CD8-positive, alpha-beta memory T cell (primary cell): ENCODE measurements at regions of chr13 and their contacts with region 1.

Region 1: DNA sequence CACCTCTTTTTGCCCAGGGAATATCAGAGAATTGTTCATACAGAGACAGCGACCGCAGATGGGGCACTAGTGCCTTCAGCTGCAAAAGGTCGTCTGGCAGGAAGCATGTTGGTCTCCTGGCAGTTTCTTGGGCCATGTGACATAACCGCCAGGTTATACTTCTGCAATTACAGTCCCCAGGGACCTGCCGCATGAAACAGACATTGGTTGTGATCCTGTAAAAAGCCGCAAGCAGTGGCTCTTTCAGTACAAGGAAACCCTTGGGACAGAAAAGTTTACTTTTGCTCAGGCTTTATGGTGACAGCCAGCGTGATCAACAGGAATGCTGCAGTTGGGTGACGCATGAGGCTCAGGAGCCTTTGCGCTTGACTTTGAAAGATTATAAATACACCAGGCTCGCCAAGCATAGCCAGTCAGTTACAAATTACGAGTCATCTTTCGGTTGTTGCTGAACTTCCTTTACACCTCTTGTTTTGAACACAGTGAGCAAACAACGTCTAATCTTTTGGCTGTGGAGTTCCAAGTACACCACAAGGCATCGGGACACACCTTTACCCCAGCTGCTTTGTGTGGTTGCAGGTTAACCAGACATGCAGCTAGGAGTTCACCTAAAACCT is 50.5 kb upstream of the UBE2L5 start:
- DNase-seq: peak in 4 of 5 donors; percentile 48 to 88 (median 84)
- H3K4me3 ChIP-seq: peak overlapping the region; percentile 19
- H3K4me3 Mint-ChIP-seq: peak overlapping the region; percentile 18 to 89 (median 86)
- H3K27ac ChIP-seq: peak overlapping the region; percentile 22
- H3K27ac Mint-ChIP-seq: peak overlapping the region; percentile 83 to 100 (median 96)
- H3K4me1 ChIP-seq: peaks cover 83% of the 10 kb centered on the region
- H3K4me1 Mint-ChIP-seq: peaks cover 77 to 93% (median 87%) of the 10 kb centered on the region in 3 donors
- H3K27me3 ChIP-seq: no peaks in the 10 kb centered on the region
- H3K27me3 Mint-ChIP-seq: peaks cover 0 to 3% of the 10 kb centered on the region in 2 donors

Region 2: DNA sequence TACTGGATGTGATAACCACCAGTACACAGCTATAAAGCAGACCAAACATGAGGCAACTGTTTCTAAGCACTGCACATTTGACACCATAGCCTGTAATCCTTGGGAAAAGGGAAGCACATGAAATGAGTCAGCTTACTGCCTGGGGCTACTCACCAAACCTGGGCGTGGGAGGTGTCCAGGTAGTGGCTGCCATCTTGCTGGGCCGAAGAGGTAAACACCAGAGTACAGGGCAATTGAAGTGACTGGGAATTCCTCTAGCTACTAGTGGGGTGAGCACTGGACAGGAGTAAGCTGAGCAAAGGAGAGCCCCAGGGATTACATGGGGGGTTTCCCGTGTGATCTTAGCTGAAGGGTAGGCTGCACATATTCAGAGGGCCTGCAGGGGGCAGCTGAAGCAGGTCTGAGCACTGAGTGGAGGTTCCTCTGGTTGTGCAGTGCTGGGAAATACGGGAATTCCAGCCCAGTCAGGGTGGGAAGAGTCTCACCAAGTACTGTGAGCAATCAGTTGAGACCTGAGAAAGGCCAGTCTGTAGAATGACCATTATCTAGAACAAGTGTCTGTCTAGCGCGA is 916.8 kb before region 1 on chr13:
- CTCF ChIA-PET with region 1: no interaction called
- POLR2A ChIA-PET with region 1: no interaction called
- DNase-seq: no peak
- H3K4me3 ChIP-seq: no peak overlapping the region
- H3K4me3 Mint-ChIP-seq: peak overlapping the region in 1 of 7 donors; percentile 11
- H3K27ac ChIP-seq: no peak overlapping the region
- H3K27ac Mint-ChIP-seq: no peak overlapping the region
- H3K4me1 ChIP-seq: no peaks in the 10 kb centered on the region
- H3K4me1 Mint-ChIP-seq: no peaks in the 10 kb centered on the region
- H3K27me3 ChIP-seq: no peaks in the 10 kb centered on the region
- H3K27me3 Mint-ChIP-seq: peaks cover 7 to 36% of the 10 kb centered on the region in 2 donors

Region 3: DNA sequence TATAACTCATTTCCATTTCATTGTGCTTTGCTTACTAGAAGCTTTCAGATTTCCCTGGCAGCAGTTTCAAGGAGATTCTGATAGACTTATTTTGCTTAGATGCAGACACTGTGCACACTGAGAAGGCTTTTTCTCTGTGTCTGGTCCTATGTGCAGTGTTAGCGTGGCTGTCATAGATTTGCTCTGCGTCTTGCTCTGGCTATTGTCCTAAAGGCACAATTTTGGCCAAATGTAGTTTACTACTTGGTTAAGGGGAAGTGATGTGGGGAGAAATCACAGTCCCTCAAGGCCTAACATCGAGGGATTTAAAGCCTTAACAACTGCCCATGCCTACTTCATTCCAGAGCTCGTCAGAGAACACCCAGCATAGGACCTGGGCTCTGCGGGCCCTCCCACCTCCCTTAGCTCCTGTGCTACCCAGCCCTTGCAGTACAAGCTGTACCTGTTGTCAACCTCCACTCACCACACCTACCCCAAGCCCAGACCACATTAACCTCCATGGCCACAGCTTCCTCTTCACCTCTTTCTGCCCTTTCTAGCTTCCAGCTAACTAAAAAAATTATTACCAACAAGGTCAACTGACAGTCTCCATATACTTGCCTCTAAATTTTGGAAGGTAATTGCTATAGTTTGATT is 25.5 kb before region 1 on chr13:
- CTCF ChIA-PET with region 1: interaction called, 19 read pairs
- POLR2A ChIA-PET with region 1: interaction called, 7 read pairs
- DNase-seq: peak; percentile 22 to 80 (median 72)
- H3K4me3 ChIP-seq: peak overlapping the region; percentile 20
- H3K4me3 Mint-ChIP-seq: peak overlapping the region; percentile 1 to 75 (median 56)
- H3K27ac ChIP-seq: no peak overlapping the region
- H3K27ac Mint-ChIP-seq: peak overlapping the region; percentile 1 to 75 (median 24)
- H3K4me1 ChIP-seq: peaks cover 35% of the 10 kb centered on the region
- H3K4me1 Mint-ChIP-seq: peaks cover 32 to 49% (median 45%) of the 10 kb centered on the region in 3 donors
- H3K27me3 ChIP-seq: no peaks in the 10 kb centered on the region
- H3K27me3 Mint-ChIP-seq: peaks cover 0 to 5% of the 10 kb centered on the region in 2 donors

Region 4: DNA sequence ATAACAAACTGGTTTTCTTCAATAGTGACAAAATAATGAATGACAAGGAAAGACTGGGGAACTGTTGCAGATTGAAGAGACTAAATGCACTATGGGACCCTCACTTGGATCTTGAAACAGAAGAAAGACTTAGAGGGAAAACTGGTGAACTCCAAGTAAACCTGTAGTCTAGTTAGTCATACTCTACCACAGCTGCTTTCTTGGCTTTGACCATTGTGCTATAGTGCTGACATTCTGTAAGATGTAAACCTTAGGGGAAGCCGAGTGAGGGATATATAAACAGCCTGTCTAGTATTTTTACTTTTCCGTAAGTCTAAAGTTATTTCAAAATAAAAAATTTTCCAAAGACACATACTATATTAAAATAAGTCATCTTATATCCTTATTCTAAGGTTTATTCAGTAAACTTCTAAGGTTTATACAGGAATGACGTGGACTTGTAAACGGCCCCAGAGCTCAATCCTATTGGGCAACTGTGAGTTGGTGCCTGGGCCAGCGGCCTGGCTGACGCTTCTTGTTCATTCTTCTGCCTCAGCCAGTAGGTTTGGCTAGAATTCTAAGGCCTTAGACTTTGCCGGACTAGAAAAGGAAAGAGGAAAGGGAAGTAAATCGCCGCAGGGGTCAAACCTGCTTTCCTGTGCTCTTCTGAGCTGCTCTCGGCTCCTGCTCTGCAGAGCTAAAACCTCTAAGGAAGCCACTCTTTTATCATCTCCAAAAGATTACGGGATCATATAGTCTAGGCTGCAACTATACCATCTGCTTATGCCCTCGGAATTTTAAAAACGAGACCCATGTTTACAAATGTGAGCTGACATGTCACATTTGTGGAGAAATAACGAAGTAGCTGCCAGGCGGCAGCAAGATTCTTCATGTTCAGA is 16.9 kb after region 1 on chr13:
- CTCF ChIA-PET with region 1: interaction called, 70 read pairs
- POLR2A ChIA-PET with region 1: interaction called, 21 read pairs
- DNase-seq: no peak
- H3K4me3 ChIP-seq: peak overlapping the region; percentile 51
- H3K4me3 Mint-ChIP-seq: peak overlapping the region in 4 of 7 donors; percentile 16 to 67 (median 63)
- H3K27ac ChIP-seq: no peak overlapping the region
- H3K27ac Mint-ChIP-seq: peak overlapping the region in 6 of 8 donors; percentile 9 to 87 (median 74)
- H3K4me1 ChIP-seq: peaks cover 30% of the 10 kb centered on the region
- H3K4me1 Mint-ChIP-seq: peaks cover 17 to 34% (median 31%) of the 10 kb centered on the region in 3 donors
- H3K27me3 ChIP-seq: no peaks in the 10 kb centered on the region
- H3K27me3 Mint-ChIP-seq: peaks cover 0 to 1% of the 10 kb centered on the region in 2 donors

Region 5: GRCh38 chr13:30395192-30396084 is 23.7 kb after region 1 on chr13:
- CTCF ChIA-PET with region 1: interaction called, 70 read pairs
- POLR2A ChIA-PET with region 1: interaction called, 21 read pairs
- DNase-seq: peak; percentile 58 to 85 (median 62)
- H3K4me3 ChIP-seq: peak overlapping the region; percentile 89
- H3K4me3 Mint-ChIP-seq: peak overlapping the region; percentile 80 to 98 (median 86)
- H3K27ac ChIP-seq: peak overlapping the region; percentile 76
- H3K27ac Mint-ChIP-seq: peak overlapping the region; percentile 71 to 99 (median 93)
- H3K4me1 ChIP-seq: peaks cover 25% of the 10 kb centered on the region
- H3K4me1 Mint-ChIP-seq: peaks cover 15 to 41% (median 40%) of the 10 kb centered on the region in 3 donors
- H3K27me3 ChIP-seq: no peaks in the 10 kb centered on the region
- H3K27me3 Mint-ChIP-seq: no peaks in the 10 kb centered on the region

Region 6: GRCh38 chr13:30408319-30409101 is 36.8 kb after region 1 on chr13:
- CTCF ChIA-PET with region 1: interaction called, 26 read pairs
- POLR2A ChIA-PET with region 1: interaction called, 4 read pairs
- DNase-seq: peak; percentile 81 to 92 (median 85)
- H3K4me3 ChIP-seq: no peak overlapping the region
- H3K4me3 Mint-ChIP-seq: peak overlapping the region; percentile 50 to 84 (median 72)
- H3K27ac ChIP-seq: no peak overlapping the region
- H3K27ac Mint-ChIP-seq: peak overlapping the region; percentile 63 to 93 (median 82)
- H3K4me1 ChIP-seq: peaks cover 10% of the 10 kb centered on the region
- H3K4me1 Mint-ChIP-seq: peaks cover 31 to 43% (median 36%) of the 10 kb centered on the region in 3 donors
- H3K27me3 ChIP-seq: no peaks in the 10 kb centered on the region
- H3K27me3 Mint-ChIP-seq: no peaks in the 10 kb centered on the region

Region 7: GRCh38 chr13:30465585-30466357 is 94.0 kb after region 1 on chr13 and contains the start of gene HMGB1:
- CTCF ChIA-PET with region 1: interaction called, 11 read pairs
- POLR2A ChIA-PET with region 1: interaction called, 9 read pairs
- DNase-seq: peak; percentile 93 to 99 (median 96)
- H3K4me3 ChIP-seq: peak within 1 kb of the TSS; percentile 77
- H3K4me3 Mint-ChIP-seq: peak within 1 kb of the TSS; percentile 91 to 99 (median 97)
- H3K27ac ChIP-seq: peak within 1 kb of the TSS; percentile 91
- H3K27ac Mint-ChIP-seq: peak within 1 kb of the TSS; percentile 98 to 99 (median 98)
- H3K4me1 ChIP-seq: peaks cover 27% of the 10 kb centered on the region
- H3K4me1 Mint-ChIP-seq: peaks cover 36 to 44% (median 40%) of the 10 kb centered on the region in 3 donors
- H3K27me3 ChIP-seq: no peaks in the 10 kb centered on the region
- H3K27me3 Mint-ChIP-seq: peaks cover 0 to 10% of the 10 kb centered on the region in 2 donors
- total RNA-seq, gene HMGB1: 694 to 729 TPM